Heart left ventricle (tissue), 16 donors: ENCODE measurements at regions of chr10 and their contacts with region 1.

Region 1: DNA sequence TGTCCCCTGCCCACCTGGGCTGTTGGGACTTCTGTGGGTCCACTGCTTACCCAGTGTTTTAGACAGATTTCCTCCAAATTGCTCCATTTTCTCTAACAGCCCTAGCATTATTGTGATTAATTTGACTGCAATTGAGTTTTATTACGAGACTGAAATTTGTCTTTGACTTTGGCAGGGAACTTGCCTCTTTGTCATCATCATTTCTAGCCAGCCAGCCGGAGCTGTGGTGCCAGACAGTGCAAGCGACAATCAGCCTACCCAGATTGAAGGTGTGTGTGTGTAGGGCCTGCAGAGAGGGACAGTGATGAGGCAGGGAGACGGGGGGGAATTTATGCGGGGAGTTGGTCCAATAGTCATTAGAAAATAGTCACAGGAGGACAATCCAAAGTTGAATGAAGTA is 743.0 kb downstream of the NRG3 start:
- DNase-seq: no peak
- ATAC-seq: no peak
- H3K4me3 ChIP-seq: no peak overlapping the region
- H3K27ac ChIP-seq: no peak overlapping the region
- H3K4me1 ChIP-seq: peaks cover 0 to 3% (median 0%) of the 10 kb centered on the region in 12 donors
- H3K27me3 ChIP-seq: no peaks in the 10 kb centered on the region
- CTCF ChIP-seq: no peak
- POLR2A ChIP-seq: no peak

Region 2: GRCh38 chr10:82597840-82598239 is 20.2 kb before region 1 on chr10:
- intact Hi-C with region 1: loop called in 1 of 10 experiments (anchors 2 kb)
- DNase-seq: no peak
- ATAC-seq: no peak
- H3K4me3 ChIP-seq: no peak overlapping the region
- H3K27ac ChIP-seq: no peak overlapping the region
- H3K4me1 ChIP-seq: no peaks in the 10 kb centered on the region
- H3K27me3 ChIP-seq: no peaks in the 10 kb centered on the region
- CTCF ChIP-seq: no peak
- POLR2A ChIP-seq: no peak